Psoas muscle (tissue), 8 donors: ENCODE measurements at regions of chr2 and their contacts with region 1.

Region 1: GRCh38 chr2:42865884-42866881 is 73.8 kb upstream of the HAAO start:
- DNase-seq: peak; percentile 84
- ATAC-seq: peak; percentile 36 to 73 (median 62)
- H3K4me3 ChIP-seq: no peak overlapping the region
- H3K27ac ChIP-seq: peak overlapping the region; percentile 20
- H3K4me1 ChIP-seq: peaks cover 15% of the 10 kb centered on the region
- H3K27me3 ChIP-seq: no peaks in the 10 kb centered on the region
- CTCF ChIP-seq: no peak

Region 2: GRCh38 chr2:41859615-41860520 is 1006.3 kb before region 1 on chr2:
- intact Hi-C with region 1: no loop called
- DNase-seq: no peak
- ATAC-seq: no peak
- H3K4me3 ChIP-seq: no peak overlapping the region
- H3K27ac ChIP-seq: no peak overlapping the region
- H3K4me1 ChIP-seq: no peaks in the 10 kb centered on the region
- H3K27me3 ChIP-seq: no peaks in the 10 kb centered on the region
- CTCF ChIP-seq: no peak

Region 3: DNA sequence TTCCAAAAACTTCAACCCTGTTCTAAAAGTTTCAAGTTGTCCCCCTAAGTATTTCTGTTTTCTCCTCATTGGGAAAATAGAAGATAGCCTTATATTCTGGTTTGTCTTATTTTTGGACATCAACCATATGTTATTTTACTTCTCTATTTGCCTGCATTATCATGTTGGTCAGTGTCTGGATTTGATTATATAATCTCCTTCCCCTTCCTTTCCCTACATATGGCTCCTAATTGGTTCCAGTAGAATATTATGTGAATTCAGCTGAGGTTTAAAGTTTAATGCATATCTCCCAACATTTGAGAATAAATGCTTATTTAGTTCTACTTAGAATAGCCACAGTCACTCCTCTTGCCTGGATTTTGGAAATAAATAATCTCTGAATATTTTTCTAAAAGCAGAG is 169.2 kb before region 1 on chr2:
- intact Hi-C with region 1: no loop called
- DNase-seq: no peak
- ATAC-seq: no peak
- H3K4me3 ChIP-seq: no peak overlapping the region
- H3K27ac ChIP-seq: no peak overlapping the region
- H3K4me1 ChIP-seq: no peaks in the 10 kb centered on the region
- H3K27me3 ChIP-seq: no peaks in the 10 kb centered on the region
- CTCF ChIP-seq: no peak

Region 4: GRCh38 chr2:42903821-42904575 is 37.8 kb after region 1 on chr2:
- intact Hi-C with region 1: loop called in 1 of 2 experiments (anchors 5 kb)
- DNase-seq: no peak
- ATAC-seq: no peak
- H3K4me3 ChIP-seq: no peak overlapping the region
- H3K27ac ChIP-seq: no peak overlapping the region
- H3K4me1 ChIP-seq: peaks cover 17% of the 10 kb centered on the region
- H3K27me3 ChIP-seq: no peaks in the 10 kb centered on the region
- CTCF ChIP-seq: no peak

Region 5: GRCh38 chr2:42928692-42929545 is 62.7 kb after region 1 on chr2:
- intact Hi-C with region 1: loop called in 1 of 2 experiments (anchors 10 kb)
- DNase-seq: no peak
- ATAC-seq: no peak
- H3K4me3 ChIP-seq: no peak overlapping the region
- H3K27ac ChIP-seq: peak overlapping the region; percentile 81
- H3K4me1 ChIP-seq: peaks cover 69% of the 10 kb centered on the region
- H3K27me3 ChIP-seq: no peaks in the 10 kb centered on the region
- CTCF ChIP-seq: no peak